T-cell (primary cell): ENCODE measurements at regions of chr11 and their contacts with region 1.

Region 1: DNA sequence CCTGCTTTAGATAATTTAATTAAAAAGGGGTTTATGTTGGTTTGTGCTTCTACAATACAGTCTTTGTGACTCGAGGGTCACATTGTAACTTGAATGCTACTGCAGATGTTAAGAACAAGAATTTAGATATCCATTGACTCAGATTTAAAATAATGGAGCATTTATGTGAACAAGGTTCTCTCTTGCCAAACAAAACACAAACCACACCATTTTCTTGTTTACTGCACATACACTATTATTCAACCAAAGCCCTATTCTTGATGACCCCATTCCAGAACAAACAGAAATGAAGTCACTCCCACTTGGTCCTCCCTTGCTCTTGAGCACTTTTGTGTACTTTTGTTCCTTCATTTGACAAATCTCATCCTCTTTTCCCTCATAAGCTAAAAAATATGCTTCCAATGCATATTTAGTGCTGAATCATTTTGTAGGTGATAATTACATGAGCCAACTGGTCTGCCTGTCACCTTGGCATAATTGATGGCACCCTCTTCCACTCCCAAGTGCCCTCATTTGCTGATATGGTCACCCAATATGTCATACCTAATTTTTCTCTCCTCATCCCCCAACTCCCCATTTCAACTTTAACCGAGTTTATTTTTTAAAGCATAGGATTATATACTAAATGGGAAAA is 2.8 kb downstream of the C11orf71 start:
- DNase-seq: no peak
- ATAC-seq: no peak
- H3K4me3 ChIP-seq: no peak overlapping the region
- H3K4me3 Mint-ChIP-seq: no peak overlapping the region
- H3K27ac ChIP-seq: no peak overlapping the region
- H3K27ac Mint-ChIP-seq: no peak overlapping the region
- H3K4me1 ChIP-seq: peaks cover 8 to 13% of the 10 kb centered on the region in 2 experiments
- H3K4me1 Mint-ChIP-seq: peaks cover 34 to 39% (median 37%) of the 10 kb centered on the region in 3 donors
- H3K27me3 ChIP-seq: no peaks in the 10 kb centered on the region
- H3K27me3 Mint-ChIP-seq: no peaks in the 10 kb centered on the region

Region 2: DNA sequence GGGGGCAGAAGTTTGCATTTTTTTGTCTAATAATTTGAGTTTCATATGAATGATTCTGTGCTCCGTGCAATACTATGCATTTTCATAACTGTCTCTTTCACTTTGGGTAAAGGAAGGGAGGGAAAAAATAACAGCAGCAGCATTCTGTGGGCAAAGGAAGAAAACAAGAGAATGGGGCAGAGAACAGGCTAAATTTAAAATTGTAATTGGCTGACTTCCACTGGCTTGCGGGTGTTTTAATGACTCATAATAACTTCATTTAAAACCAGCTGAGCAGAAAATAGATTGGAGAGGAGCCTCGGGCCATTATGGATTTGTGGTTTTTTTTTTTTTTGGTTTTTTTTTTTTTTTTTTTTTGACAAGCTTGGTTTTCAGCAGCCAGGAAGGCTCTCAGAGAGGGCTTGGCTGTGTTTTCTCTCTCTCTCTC is 230.6 kb before region 1 on chr11:
- CTCF ChIA-PET with region 1: no interaction called
- POLR2A ChIA-PET with region 1: interaction called in 1 of 2 experiments, 14 read pairs
- DNase-seq: peak in 2 of 35 experiments; percentile 18 to 57
- ATAC-seq: peak; percentile 64 to 78 (median 68)
- H3K4me3 ChIP-seq: no peak overlapping the region
- H3K4me3 Mint-ChIP-seq: peak overlapping the region; percentile 17 to 68 (median 44)
- H3K27ac ChIP-seq: peak overlapping the region; percentile 38
- H3K27ac Mint-ChIP-seq: peak overlapping the region; percentile 79 to 82
- H3K4me1 ChIP-seq: peaks cover 47 to 78% of the 10 kb centered on the region in 2 experiments
- H3K4me1 Mint-ChIP-seq: peaks cover 88 to 98% (median 98%) of the 10 kb centered on the region in 3 donors
- H3K27me3 ChIP-seq: no peaks in the 10 kb centered on the region
- H3K27me3 Mint-ChIP-seq: no peaks in the 10 kb centered on the region

Region 3: GRCh38 chr11:114382509-114382908 is 15.0 kb before region 1 on chr11:
- CTCF ChIA-PET with region 1: interaction called in 1 of 2 experiments, 3 read pairs
- POLR2A ChIA-PET with region 1: interaction called in 1 of 2 experiments, 10 read pairs
- DNase-seq: no peak
- ATAC-seq: no peak
- H3K4me3 ChIP-seq: no peak overlapping the region
- H3K4me3 Mint-ChIP-seq: no peak overlapping the region
- H3K27ac ChIP-seq: no peak overlapping the region
- H3K27ac Mint-ChIP-seq: no peak overlapping the region
- H3K4me1 ChIP-seq: peaks cover 0 to 5% of the 10 kb centered on the region in 2 experiments
- H3K4me1 Mint-ChIP-seq: peaks cover 6 to 12% (median 11%) of the 10 kb centered on the region in 3 donors
- H3K27me3 ChIP-seq: peaks cover 0 to 3% of the 10 kb centered on the region in 2 experiments
- H3K27me3 Mint-ChIP-seq: peaks cover 8 to 11% of the 10 kb centered on the region in 2 donors